ENCODE measurements at regions of chr16 and their contacts with region 1.

Region 1: GRCh38 chr16:55370762-55371482 is 46.9 kb downstream of the IRX6 start:
- DNase-seq: peak in 1 of 2 donors; percentile 79
- H3K4me3 ChIP-seq: peak overlapping the region in 1 of 2 donors; percentile 30
- H3K27ac ChIP-seq: no peak overlapping the region
- H3K4me1 ChIP-seq: peaks cover 0 to 19% of the 10 kb centered on the region in 2 donors
- H3K27me3 ChIP-seq: no peaks in the 10 kb centered on the region
- CTCF ChIP-seq: peak in 2 of 3 experiments; percentile 45 to 60

Region 2: GRCh38 chr16:54936979-54937670 is 433.8 kb before region 1 on chr16:
- intact Hi-C with region 1: loop called (anchors 5 kb)
- DNase-seq: no peak
- H3K4me3 ChIP-seq: peak overlapping the region; percentile 31 to 63
- H3K27ac ChIP-seq: peak overlapping the region in 1 of 2 donors; percentile 23
- H3K4me1 ChIP-seq: peaks cover 2 to 16% of the 10 kb centered on the region in 2 donors
- H3K27me3 ChIP-seq: no peaks in the 10 kb centered on the region
- CTCF ChIP-seq: peak; percentile 28 to 49 (median 45)